CD8-positive, alpha-beta T cell (primary cell): ENCODE measurements at regions of chr9 and their contacts with region 1.

Region 1: DNA sequence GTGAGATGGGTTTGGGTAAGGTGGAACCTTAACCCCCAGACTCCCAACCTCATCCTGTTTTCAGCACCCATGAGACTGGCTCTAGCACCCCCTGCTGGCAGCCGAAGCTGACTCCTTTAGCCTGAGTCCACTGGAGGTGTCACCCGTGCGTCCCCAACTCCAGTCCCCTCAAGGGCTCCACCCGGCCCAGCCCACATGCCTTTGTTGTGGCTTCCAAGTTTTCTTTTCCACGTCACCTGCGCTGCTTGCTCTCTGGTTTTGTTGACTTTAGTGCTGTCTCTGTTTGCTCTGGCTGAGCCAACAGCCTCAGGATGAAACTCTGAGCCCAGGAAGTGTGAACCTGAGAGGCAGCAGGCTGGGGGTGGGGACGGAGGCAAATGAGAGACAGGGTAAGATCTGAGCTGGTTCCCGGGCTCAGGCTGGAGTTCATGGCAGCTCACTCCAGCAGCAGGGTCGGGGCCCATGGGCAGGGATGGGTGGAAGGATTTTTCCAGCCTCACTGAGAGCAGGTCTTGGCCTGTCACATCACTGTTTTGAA is 13.2 kb upstream of the AQP7 start:
- DNase-seq: peak; percentile 83 to 97 (median 93)
- ATAC-seq: peak; percentile 88
- H3K4me3 ChIP-seq: peak overlapping the region in 1 of 2 experiments; percentile 7
- H3K4me3 Mint-ChIP-seq: peak overlapping the region; percentile 72
- H3K27ac ChIP-seq: peak overlapping the region; percentile 34 to 41
- H3K27ac Mint-ChIP-seq: peak overlapping the region; percentile 95
- H3K4me1 ChIP-seq: peaks cover 42% of the 10 kb centered on the region
- H3K4me1 Mint-ChIP-seq: peaks cover 50% of the 10 kb centered on the region
- H3K27me3 ChIP-seq: no peaks in the 10 kb centered on the region
- H3K27me3 Mint-ChIP-seq: no peaks in the 10 kb centered on the region
- CTCF ChIP-seq: peak; percentile 63

Region 2: DNA sequence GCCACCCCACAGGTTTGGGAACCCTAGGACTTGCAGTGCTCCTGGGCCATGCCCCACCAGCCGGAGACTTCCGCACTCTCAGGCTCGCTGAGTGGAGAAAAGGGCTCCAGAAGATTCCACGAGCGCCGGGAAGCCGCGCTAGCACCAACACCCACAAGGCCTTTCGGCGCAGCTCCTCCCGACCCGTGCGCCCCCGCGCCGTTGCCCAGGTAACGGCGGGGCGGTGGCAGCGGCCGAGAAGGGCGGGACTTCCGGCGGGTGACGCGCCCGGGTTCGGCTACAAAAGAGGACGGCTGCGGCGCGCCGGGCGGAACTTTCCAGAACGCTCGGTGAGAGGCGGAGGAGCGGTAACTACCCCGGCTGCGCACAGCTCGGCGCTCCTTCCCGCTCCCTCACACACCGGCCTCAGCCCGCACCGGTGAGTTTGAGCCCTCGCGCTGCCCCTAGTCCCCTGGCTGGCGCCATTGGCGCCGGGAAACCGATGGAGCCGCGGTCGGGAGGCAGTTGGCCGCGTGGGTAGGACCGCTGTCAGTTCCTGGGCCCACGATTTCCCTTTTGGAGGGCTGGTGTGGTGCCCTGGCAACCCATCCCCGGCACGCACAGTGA is 390.5 kb before region 1 on chr9 and contains the start of gene DNAJA1:
- CTCF ChIA-PET with region 1: no interaction called
- POLR2A ChIA-PET with region 1: no interaction called
- intact Hi-C with region 1: no loop called
- DNase-seq: peak; percentile 92 to 98 (median 96)
- ATAC-seq: peak; percentile 80
- H3K4me3 ChIP-seq: peak within 1 kb of the TSS; percentile 100
- H3K4me3 Mint-ChIP-seq: peak within 1 kb of the TSS; percentile 96
- H3K27ac ChIP-seq: peak within 1 kb of the TSS; percentile 100
- H3K27ac Mint-ChIP-seq: peak within 1 kb of the TSS; percentile 96
- H3K4me1 ChIP-seq: peaks cover 63% of the 10 kb centered on the region
- H3K4me1 Mint-ChIP-seq: peaks cover 70% of the 10 kb centered on the region
- H3K27me3 ChIP-seq: no peaks in the 10 kb centered on the region
- H3K27me3 Mint-ChIP-seq: no peaks in the 10 kb centered on the region
- CTCF ChIP-seq: no peak
- total RNA-seq, gene DNAJA1: 170 to 172 TPM

Region 3: DNA sequence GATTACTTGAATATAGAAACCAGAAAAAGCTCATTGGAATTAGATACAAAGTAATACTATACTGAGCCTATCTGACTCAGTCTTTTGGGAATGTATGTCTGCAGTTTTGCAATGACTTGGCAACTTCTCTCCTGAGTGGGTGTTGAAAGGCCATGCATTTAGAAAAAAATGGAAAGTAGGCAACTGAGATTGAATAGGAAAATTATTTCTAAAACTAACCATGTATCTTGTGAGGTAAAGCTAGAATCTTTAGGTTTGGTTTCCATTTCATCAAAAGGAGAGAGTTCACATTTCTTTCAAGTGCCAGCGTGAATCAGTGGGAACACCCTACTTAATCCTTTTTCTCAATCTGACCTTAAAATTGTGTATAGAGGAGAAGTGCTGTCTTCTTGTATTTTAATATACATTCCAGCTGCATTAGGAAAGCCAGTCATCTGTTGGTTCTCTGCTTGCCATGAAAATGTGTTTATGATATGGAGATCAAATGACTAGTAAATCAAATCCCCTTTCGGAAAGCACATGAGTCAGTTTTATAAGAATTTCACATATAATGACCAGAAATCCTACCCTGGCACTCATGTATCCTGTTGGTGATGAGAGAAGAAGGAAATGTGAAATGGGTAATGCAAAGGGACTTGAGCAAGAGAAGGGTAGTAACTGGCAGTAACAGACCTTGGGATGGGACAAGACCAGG is 94.9 kb before region 1 on chr9:
- CTCF ChIA-PET with region 1: no interaction called
- POLR2A ChIA-PET with region 1: no interaction called
- intact Hi-C with region 1: no loop called
- DNase-seq: no peak
- ATAC-seq: no peak
- H3K4me3 ChIP-seq: no peak overlapping the region
- H3K4me3 Mint-ChIP-seq: no peak overlapping the region
- H3K27ac ChIP-seq: no peak overlapping the region
- H3K27ac Mint-ChIP-seq: peak overlapping the region; percentile 27
- H3K4me1 ChIP-seq: no peaks in the 10 kb centered on the region
- H3K4me1 Mint-ChIP-seq: no peaks in the 10 kb centered on the region
- H3K27me3 ChIP-seq: no peaks in the 10 kb centered on the region
- H3K27me3 Mint-ChIP-seq: no peaks in the 10 kb centered on the region
- CTCF ChIP-seq: no peak

Region 4: GRCh38 chr9:33446946-33447798 is 31.6 kb after region 1 on chr9 and contains the start of gene AQP3:
- CTCF ChIA-PET with region 1: interaction called, 70 read pairs
- POLR2A ChIA-PET with region 1: interaction called, 23 read pairs
- intact Hi-C with region 1: loop called (anchors 1 kb)
- DNase-seq: peak; percentile 49 to 88 (median 76)
- ATAC-seq: peak; percentile 53
- H3K4me3 ChIP-seq: peak within 1 kb of the TSS; percentile 58 to 79
- H3K4me3 Mint-ChIP-seq: peak within 1 kb of the TSS; percentile 95
- H3K27ac ChIP-seq: peak within 1 kb of the TSS; percentile 62 to 81
- H3K27ac Mint-ChIP-seq: peak within 1 kb of the TSS; percentile 96
- H3K4me1 ChIP-seq: peaks cover 39% of the 10 kb centered on the region
- H3K4me1 Mint-ChIP-seq: peaks cover 52% of the 10 kb centered on the region
- H3K27me3 ChIP-seq: no peaks in the 10 kb centered on the region
- H3K27me3 Mint-ChIP-seq: no peaks in the 10 kb centered on the region
- CTCF ChIP-seq: no peak
- total RNA-seq, gene AQP3: 48.0 to 50.3 TPM

Region 5: GRCh38 chr9:33452828-33453271 is 37.3 kb after region 1 on chr9:
- CTCF ChIA-PET with region 1: interaction called, 70 read pairs
- POLR2A ChIA-PET with region 1: interaction called, 23 read pairs
- intact Hi-C with region 1: no loop called
- DNase-seq: peak in 8 of 9 experiments; percentile 32 to 67 (median 61)
- ATAC-seq: peak; percentile 70
- H3K4me3 ChIP-seq: no peak overlapping the region
- H3K4me3 Mint-ChIP-seq: no peak overlapping the region
- H3K27ac ChIP-seq: peak overlapping the region in 1 of 2 experiments; percentile 4
- H3K27ac Mint-ChIP-seq: peak overlapping the region; percentile 87
- H3K4me1 ChIP-seq: peaks cover 62% of the 10 kb centered on the region
- H3K4me1 Mint-ChIP-seq: peaks cover 62% of the 10 kb centered on the region
- H3K27me3 ChIP-seq: no peaks in the 10 kb centered on the region
- H3K27me3 Mint-ChIP-seq: no peaks in the 10 kb centered on the region
- CTCF ChIP-seq: peak; percentile 56

Region 6: DNA sequence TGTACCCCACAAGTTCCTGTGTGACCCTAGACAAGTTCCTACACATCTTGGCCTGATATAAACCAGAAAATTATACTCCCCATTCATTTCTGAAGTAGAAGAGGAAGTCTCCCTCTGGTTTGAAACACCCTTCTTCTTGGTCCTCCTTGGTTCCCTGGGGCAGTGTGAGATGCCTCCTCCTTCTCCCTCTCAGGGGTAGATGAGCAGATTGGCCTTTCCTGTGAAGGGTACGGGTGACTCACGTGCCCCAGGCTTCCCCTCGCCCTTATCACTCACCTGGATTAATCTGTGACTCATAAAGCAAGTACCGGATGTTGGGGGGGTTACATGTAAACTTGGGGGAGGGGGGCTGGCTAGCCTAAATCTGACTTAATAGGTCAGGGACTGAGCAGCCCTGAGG is 42.9 kb after region 1 on chr9:
- CTCF ChIA-PET with region 1: interaction called, 75 read pairs
- POLR2A ChIA-PET with region 1: interaction called, 5 read pairs
- intact Hi-C with region 1: no loop called
- DNase-seq: peak in 8 of 9 experiments; percentile 53 to 80 (median 72)
- ATAC-seq: peak; percentile 84
- H3K4me3 ChIP-seq: no peak overlapping the region
- H3K4me3 Mint-ChIP-seq: peak overlapping the region; percentile 56
- H3K27ac ChIP-seq: peak overlapping the region; percentile 7 to 70
- H3K27ac Mint-ChIP-seq: peak overlapping the region; percentile 93
- H3K4me1 ChIP-seq: peaks cover 53% of the 10 kb centered on the region
- H3K4me1 Mint-ChIP-seq: peaks cover 51% of the 10 kb centered on the region
- H3K27me3 ChIP-seq: no peaks in the 10 kb centered on the region
- H3K27me3 Mint-ChIP-seq: no peaks in the 10 kb centered on the region
- CTCF ChIP-seq: no peak

Region 7: DNA sequence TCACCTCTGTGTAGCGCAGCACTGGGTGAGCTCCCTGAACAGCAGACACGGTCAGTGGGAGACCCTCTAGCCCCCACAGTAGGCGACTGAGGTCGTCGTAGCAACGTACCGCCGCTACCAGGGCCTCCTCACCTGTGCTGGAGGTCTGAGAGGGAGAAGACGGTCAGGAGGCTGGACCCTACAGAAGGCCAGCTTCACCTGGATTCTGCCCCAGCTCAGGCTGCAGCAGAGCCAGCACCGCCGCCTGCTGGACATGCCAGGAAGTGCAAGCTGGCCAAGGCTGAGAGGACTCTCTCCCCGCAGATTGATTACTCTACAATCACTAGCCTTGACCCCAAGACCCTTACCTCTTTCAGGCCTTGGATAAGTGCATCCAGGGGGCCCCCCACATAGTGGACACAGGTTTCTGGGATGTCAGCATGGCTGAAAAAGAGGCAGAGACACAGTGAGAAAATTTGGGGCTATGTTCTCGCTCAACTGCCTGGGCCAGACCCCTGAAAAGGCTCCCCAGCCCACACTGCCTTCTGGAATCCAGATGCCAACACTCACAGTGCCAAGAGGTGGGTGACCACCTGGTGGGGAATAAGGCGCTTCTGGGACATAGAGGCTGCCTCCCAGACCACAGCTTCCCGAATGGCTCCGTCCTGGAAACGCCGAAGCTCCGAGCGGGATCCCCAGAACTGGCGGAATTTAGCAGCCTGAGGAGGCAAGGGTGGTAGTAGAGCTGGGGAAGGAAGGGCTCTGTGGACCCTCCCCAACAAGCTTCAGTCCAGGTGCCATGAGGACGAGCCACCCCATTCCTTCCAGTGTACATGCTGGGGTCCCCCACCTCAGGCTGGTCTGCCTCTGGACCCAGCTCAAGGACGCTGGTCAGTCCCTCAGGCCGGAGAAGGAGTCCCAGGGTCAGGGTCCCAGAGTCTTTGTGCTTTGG is 51.3 kb after region 1 on chr9:
- CTCF ChIA-PET with region 1: interaction called, 75 read pairs
- POLR2A ChIA-PET with region 1: interaction called, 6 read pairs
- intact Hi-C with region 1: loop called in 1 of 2 experiments (anchors 2 kb)
- DNase-seq: peak; percentile 42 to 85 (median 72)
- ATAC-seq: peak; percentile 93
- H3K4me3 ChIP-seq: no peak overlapping the region
- H3K4me3 Mint-ChIP-seq: no peak overlapping the region
- H3K27ac ChIP-seq: no peak overlapping the region
- H3K27ac Mint-ChIP-seq: peak overlapping the region; percentile 22
- H3K4me1 ChIP-seq: peaks cover 5% of the 10 kb centered on the region
- H3K4me1 Mint-ChIP-seq: peaks cover 10% of the 10 kb centered on the region
- H3K27me3 ChIP-seq: no peaks in the 10 kb centered on the region
- H3K27me3 Mint-ChIP-seq: no peaks in the 10 kb centered on the region
- CTCF ChIP-seq: peak; percentile 85